ENCODE measurements at regions of chr21 and their contacts with region 1.

Region 1: GRCh38 chr21:25421327-25422028 is 185.8 kb downstream of the MRPL39 start:
- DNase-seq: peak; percentile 70
- H3K4me3 ChIP-seq: no peak overlapping the region
- H3K27ac ChIP-seq: no peak overlapping the region
- H3K4me1 ChIP-seq: no peaks in the 10 kb centered on the region
- H3K27me3 ChIP-seq: no peaks in the 10 kb centered on the region
- CTCF ChIP-seq: peak; percentile 66

Region 2: GRCh38 chr21:25578056-25578961 is 156.8 kb after region 1 on chr21:
- CTCF ChIA-PET with region 1: no interaction called
- POLR2A ChIA-PET with region 1: no interaction called
- intact Hi-C with region 1: loop called (anchors 5 kb)
- DNase-seq: no peak
- H3K4me3 ChIP-seq: no peak overlapping the region
- H3K27ac ChIP-seq: no peak overlapping the region
- H3K4me1 ChIP-seq: peaks cover 4% of the 10 kb centered on the region
- H3K27me3 ChIP-seq: no peaks in the 10 kb centered on the region
- CTCF ChIP-seq: no peak